Dorsolateral prefrontal cortex (tissue), 120 donors: ENCODE measurements at regions of chr1 and their contacts with region 1.

Region 1: DNA sequence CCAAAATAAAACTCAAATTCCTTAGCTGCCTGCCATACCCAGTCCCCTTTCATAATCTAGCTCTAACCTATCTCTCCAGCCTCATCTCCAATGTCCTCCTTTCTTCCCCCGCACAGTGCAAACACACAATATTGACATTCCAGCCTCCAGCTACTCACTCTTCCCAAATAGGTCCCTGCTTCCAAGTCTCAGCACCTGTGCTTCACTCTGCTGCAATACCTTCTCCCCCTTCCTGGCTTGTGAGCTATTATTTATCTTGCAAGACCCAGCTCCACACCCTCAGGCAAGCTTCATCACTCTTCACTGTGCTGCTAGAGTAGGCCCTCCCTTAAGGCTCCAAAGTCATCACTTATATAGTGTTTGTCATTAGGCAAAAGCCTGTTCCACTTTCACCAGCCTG is 9.7 kb downstream of the PLPP3 start:
- DNase-seq: no peak
- H3K4me3 ChIP-seq: no peak overlapping the region
- H3K27ac ChIP-seq: peak overlapping the region in 29 of 59 donors; percentile 0 to 93 (median 34)
- H3K27me3 ChIP-seq: peaks cover 0 to 7% (median 0%) of the 10 kb centered on the region in 45 donors
- CTCF ChIP-seq: no peak

Region 2: DNA sequence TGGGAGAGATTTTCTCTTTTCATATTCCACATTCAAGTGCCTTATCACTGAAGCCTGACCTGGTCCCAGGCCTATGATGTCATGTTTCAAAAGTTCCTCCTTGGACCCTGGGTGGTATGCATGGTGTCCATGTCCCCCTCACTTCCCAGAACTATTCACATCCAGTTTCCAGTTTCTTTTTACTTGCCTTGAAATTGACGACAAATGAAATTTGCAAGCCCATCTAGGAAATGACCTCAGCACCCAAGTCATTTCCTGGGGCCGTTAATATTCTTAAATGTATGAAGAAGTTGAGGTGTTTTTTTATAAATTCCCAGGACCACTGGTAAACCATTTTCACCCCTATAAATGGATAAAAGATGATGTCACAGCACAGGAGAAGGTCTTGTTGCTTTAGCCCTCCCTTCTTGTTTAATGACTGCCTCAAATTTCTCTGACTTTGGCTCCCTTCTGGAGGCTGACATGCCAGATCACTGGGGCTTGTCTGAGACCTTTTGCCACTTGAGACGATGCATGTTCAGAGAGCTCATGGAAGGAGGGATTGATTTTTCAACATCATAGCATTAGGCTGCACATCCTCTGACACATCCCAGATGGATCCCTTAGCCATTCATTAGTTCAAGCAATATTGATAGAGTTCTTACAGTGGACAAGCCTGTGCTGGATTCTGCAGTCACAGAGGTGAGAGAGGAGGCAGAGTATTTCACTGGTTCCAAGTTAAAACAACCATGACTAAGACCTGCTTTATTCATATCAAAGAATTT is 211.6 kb before region 1 on chr1:
- intact Hi-C with region 1: loop called in 1 of 2 experiments (anchors 10 kb)
- DNase-seq: no peak
- H3K4me3 ChIP-seq: no peak overlapping the region
- H3K27ac ChIP-seq: no peak overlapping the region
- H3K27me3 ChIP-seq: peaks cover 0 to 3% (median 0%) of the 10 kb centered on the region in 45 donors
- CTCF ChIP-seq: no peak

Region 3: DNA sequence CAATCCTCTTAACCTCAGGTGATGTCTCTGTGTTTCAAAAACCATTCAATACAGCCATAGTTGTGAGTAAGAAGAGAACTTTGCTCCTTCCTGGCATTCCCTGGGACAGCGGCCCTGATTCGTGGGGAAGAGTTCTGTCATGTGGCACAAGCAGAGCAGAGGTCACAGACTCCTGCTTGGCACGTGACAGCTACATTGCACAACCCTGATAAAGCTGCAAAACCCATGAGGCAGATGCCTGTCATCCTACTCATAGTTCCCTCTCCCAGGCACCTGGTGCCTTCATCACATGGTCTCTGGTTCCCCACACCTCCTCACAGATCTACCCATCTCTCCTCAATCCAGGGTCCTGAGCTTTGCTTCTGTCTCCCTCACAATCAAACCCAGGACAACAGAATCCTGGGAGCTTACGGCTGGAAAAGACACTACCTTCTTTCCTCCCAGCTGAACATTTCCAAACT is 61.1 kb before region 1 on chr1:
- intact Hi-C with region 1: no loop called
- DNase-seq: no peak
- H3K4me3 ChIP-seq: no peak overlapping the region
- H3K27ac ChIP-seq: peak overlapping the region in 9 of 59 donors; percentile 27 to 71 (median 48)
- H3K27me3 ChIP-seq: peaks cover 0 to 2% (median 0%) of the 10 kb centered on the region in 45 donors
- CTCF ChIP-seq: no peak